Naive thymus-derived CD4-positive, alpha-beta T cell (primary cell): ENCODE measurements at regions of chr11 and their contacts with region 1.

Region 1: DNA sequence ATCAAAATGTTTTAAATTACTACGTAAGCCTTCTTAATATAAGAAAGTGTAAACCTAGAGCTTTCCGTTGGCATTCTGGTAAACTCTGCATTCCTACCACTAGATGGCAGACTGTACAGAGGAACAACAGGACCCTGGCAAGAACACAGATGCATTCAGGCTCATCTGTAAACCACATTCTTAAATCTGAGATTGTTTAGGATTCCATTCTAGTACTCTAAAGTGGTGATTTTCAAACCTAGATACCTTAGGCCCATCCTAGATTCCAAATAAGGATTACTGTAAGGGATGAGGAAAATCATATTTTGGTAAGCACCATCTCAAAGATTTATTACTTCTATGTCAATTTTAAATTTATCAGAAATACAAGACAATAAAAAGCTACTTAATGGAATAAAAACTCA is 26.9 kb downstream of the PICALM start:
- DNase-seq: peak in 7 of 9 donors; percentile 63 to 79 (median 71)
- ATAC-seq: peak; percentile 98
- H3K4me3 ChIP-seq: no peak overlapping the region
- H3K4me3 Mint-ChIP-seq: peak overlapping the region in 4 of 10 donors; percentile 1 to 8 (median 5)
- H3K27ac ChIP-seq: peak overlapping the region; percentile 20
- H3K27ac Mint-ChIP-seq: peak overlapping the region in 7 of 9 donors; percentile 11 to 68 (median 38)
- H3K4me1 ChIP-seq: peaks cover 19 to 54% of the 10 kb centered on the region in 2 donors
- H3K4me1 Mint-ChIP-seq: peaks cover 49 to 73% (median 67%) of the 10 kb centered on the region in 7 donors
- H3K27me3 ChIP-seq: no peaks in the 10 kb centered on the region
- H3K27me3 Mint-ChIP-seq: no peaks in the 10 kb centered on the region

Region 2: DNA sequence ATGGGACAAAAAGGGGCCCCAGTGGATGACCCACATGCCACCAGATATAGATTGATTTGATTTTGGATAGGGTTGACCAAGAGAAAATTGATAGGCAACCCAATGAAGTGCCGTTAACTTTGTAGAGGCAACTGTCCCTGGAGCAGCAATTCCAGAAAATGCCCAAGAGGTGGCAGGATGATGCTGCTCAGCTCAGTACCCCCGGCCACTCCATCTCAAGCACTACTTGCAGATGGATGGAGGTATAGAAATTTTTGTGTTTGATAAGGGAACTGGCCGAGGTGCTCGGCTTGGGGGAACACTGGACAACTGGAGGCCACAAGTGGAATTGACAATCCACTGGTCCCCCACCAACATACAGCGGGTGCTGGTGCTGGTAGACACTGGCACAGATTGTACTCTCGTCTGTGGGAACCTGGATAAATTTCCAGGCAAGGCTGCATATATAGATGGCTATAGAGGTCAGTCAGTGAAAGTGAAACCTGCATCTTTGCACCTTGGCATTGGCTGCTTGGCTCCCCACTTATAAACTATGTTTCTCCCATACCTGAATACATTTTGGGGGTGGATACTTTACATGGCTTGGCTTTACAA is 100.5 kb before region 1 on chr11:
- CTCF ChIA-PET with region 1: no interaction called
- POLR2A ChIA-PET with region 1: no interaction called
- intact Hi-C with region 1: no loop called
- DNase-seq: no peak
- ATAC-seq: peak; percentile 61
- H3K4me3 ChIP-seq: no peak overlapping the region
- H3K4me3 Mint-ChIP-seq: no peak overlapping the region
- H3K27ac ChIP-seq: no peak overlapping the region
- H3K27ac Mint-ChIP-seq: no peak overlapping the region
- H3K4me1 ChIP-seq: no peaks in the 10 kb centered on the region
- H3K4me1 Mint-ChIP-seq: peaks cover 0 to 10% (median 0%) of the 10 kb centered on the region in 7 donors
- H3K27me3 ChIP-seq: no peaks in the 10 kb centered on the region
- H3K27me3 Mint-ChIP-seq: no peaks in the 10 kb centered on the region

Region 3: GRCh38 chr11:86062719-86063118 is 20.7 kb after region 1 on chr11:
- CTCF ChIA-PET with region 1: interaction called, 10 read pairs
- POLR2A ChIA-PET with region 1: interaction called, 16 read pairs
- intact Hi-C with region 1: loop called in 1 of 2 experiments (anchors 1 kb)
- DNase-seq: peak in 5 of 9 donors; percentile 7 to 25 (median 13)
- ATAC-seq: peak; percentile 70
- H3K4me3 ChIP-seq: peak overlapping the region; percentile 9
- H3K4me3 Mint-ChIP-seq: peak overlapping the region; percentile 35 to 97 (median 80)
- H3K27ac ChIP-seq: peak overlapping the region; percentile 30
- H3K27ac Mint-ChIP-seq: peak overlapping the region in 8 of 9 donors; percentile 14 to 89 (median 70)
- H3K4me1 ChIP-seq: peaks cover 50 to 53% of the 10 kb centered on the region in 2 donors
- H3K4me1 Mint-ChIP-seq: peaks cover 73 to 91% (median 85%) of the 10 kb centered on the region in 7 donors
- H3K27me3 ChIP-seq: no peaks in the 10 kb centered on the region
- H3K27me3 Mint-ChIP-seq: no peaks in the 10 kb centered on the region

Region 4: GRCh38 chr11:86138958-86139357 is 97.0 kb after region 1 on chr11:
- CTCF ChIA-PET with region 1: interaction called, 3 read pairs
- POLR2A ChIA-PET with region 1: no interaction called
- intact Hi-C with region 1: loop called in 1 of 2 experiments (anchors 5 kb)
- DNase-seq: peak in 1 of 9 donors; percentile 4
- ATAC-seq: peak; percentile 65
- H3K4me3 ChIP-seq: peak overlapping the region; percentile 5
- H3K4me3 Mint-ChIP-seq: peak overlapping the region in 9 of 10 donors; percentile 37 to 76 (median 45)
- H3K27ac ChIP-seq: no peak overlapping the region
- H3K27ac Mint-ChIP-seq: peak overlapping the region; percentile 7 to 87 (median 76)
- H3K4me1 ChIP-seq: peaks cover 4 to 30% of the 10 kb centered on the region in 2 donors
- H3K4me1 Mint-ChIP-seq: peaks cover 11 to 66% (median 16%) of the 10 kb centered on the region in 7 donors
- H3K27me3 ChIP-seq: no peaks in the 10 kb centered on the region
- H3K27me3 Mint-ChIP-seq: no peaks in the 10 kb centered on the region

Region 5: DNA sequence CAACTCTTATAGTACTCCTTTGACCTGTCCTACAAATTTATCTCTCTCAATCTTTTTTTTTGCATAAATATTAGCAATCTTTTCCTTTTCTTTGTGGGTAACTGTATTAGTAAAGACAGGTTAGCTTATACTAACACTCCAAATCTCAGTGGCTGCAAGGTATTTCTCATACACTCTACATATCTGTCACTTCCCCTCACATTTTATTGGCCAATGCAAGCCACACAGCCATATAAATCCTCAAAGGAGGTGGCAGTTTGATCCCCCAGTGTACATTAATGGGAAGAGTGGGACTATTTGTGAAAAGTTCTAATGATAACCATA is 160.0 kb after region 1 on chr11:
- CTCF ChIA-PET with region 1: interaction called, 94 read pairs
- POLR2A ChIA-PET with region 1: interaction called, 3 read pairs
- intact Hi-C with region 1: loop called (anchors 2 kb)
- DNase-seq: peak in 2 of 9 donors; percentile 7 to 17
- ATAC-seq: peak; percentile 71
- H3K4me3 ChIP-seq: peak overlapping the region; percentile 58
- H3K4me3 Mint-ChIP-seq: no peak overlapping the region
- H3K27ac ChIP-seq: peak overlapping the region; percentile 12
- H3K27ac Mint-ChIP-seq: no peak overlapping the region
- H3K4me1 ChIP-seq: peaks cover 4 to 11% of the 10 kb centered on the region in 2 donors
- H3K4me1 Mint-ChIP-seq: peaks cover 0 to 8% (median 0%) of the 10 kb centered on the region in 7 donors
- H3K27me3 ChIP-seq: no peaks in the 10 kb centered on the region
- H3K27me3 Mint-ChIP-seq: no peaks in the 10 kb centered on the region

Region 6: GRCh38 chr11:86291466-86292262 is 249.7 kb after region 1 on chr11:
- CTCF ChIA-PET with region 1: interaction called, 3 read pairs
- POLR2A ChIA-PET with region 1: no interaction called
- intact Hi-C with region 1: loop called (anchors 1 kb)
- DNase-seq: peak; percentile 11 to 63 (median 49)
- ATAC-seq: peak; percentile 76
- H3K4me3 ChIP-seq: no peak overlapping the region
- H3K4me3 Mint-ChIP-seq: peak overlapping the region in 1 of 10 donors; percentile 23
- H3K27ac ChIP-seq: no peak overlapping the region
- H3K27ac Mint-ChIP-seq: peak overlapping the region in 1 of 9 donors; percentile 35
- H3K4me1 ChIP-seq: peaks cover 0 to 27% of the 10 kb centered on the region in 2 donors
- H3K4me1 Mint-ChIP-seq: peaks cover 5 to 47% (median 9%) of the 10 kb centered on the region in 7 donors
- H3K27me3 ChIP-seq: no peaks in the 10 kb centered on the region
- H3K27me3 Mint-ChIP-seq: no peaks in the 10 kb centered on the region

Region 7: GRCh38 chr11:87331273-87331672 is 1289.3 kb after region 1 on chr11:
- CTCF ChIA-PET with region 1: no interaction called
- POLR2A ChIA-PET with region 1: no interaction called
- intact Hi-C with region 1: no loop called
- DNase-seq: no peak
- ATAC-seq: no peak
- H3K4me3 ChIP-seq: no peak overlapping the region
- H3K4me3 Mint-ChIP-seq: no peak overlapping the region
- H3K27ac ChIP-seq: no peak overlapping the region
- H3K27ac Mint-ChIP-seq: peak overlapping the region in 1 of 9 donors; percentile 6
- H3K4me1 ChIP-seq: no peaks in the 10 kb centered on the region
- H3K4me1 Mint-ChIP-seq: no peaks in the 10 kb centered on the region
- H3K27me3 ChIP-seq: no peaks in the 10 kb centered on the region
- H3K27me3 Mint-ChIP-seq: no peaks in the 10 kb centered on the region